Activated CD4-positive, alpha-beta memory T cell treated with anti-CD3 and anti-CD28 coated beads for 36 hours (primary cell): ENCODE measurements at regions of chr11 and their contacts with region 1.

Region 1: DNA sequence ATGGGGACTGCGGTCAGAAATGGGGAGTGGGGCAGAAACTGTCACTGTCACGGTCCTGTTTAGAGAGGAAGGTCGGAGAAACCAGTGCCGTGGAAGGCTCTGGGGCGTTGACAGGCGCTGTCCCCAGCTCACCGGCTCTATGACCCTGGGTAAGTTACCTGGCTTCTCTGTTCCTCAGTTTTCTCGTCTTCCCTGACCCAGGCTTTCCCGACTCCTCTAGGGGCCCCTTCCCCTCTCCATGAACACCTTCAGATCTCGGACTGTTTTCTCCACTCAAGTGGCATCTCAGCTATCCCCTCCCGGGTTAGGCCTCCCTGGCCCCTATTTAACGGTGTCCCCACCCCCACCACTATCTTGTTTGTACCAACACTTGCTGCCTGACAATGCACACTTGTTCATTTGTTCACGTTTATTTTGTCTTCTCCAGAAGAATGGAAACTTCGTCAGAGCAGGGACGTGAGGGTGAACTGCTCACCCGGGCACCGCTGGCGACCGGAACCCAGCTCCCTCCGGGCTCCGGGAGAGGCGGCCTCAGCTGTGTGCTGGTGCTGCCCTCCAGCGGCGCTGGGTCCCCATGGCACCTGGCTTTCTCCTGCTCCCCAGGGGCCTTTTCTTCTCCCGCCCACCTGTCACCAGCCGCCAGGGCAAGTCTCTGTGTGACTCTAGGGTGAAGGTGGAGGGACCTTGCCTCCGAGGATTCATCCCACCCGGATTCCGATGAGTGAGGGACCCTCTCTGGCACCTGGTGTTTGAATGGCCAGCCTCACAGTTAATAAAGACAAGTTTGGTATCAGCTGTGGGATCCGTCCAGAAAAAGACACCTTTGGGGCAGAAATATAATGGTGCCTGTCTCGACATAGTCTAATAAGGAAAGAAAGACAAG is 33.1 kb upstream of the SLC35C1 start:
- DNase-seq: peak; percentile 92
- H3K4me3 Mint-ChIP-seq: peak overlapping the region; percentile 86
- H3K27ac Mint-ChIP-seq: peak overlapping the region; percentile 35
- H3K4me1 Mint-ChIP-seq: peaks cover 24% of the 10 kb centered on the region
- H3K27me3 Mint-ChIP-seq: no peaks in the 10 kb centered on the region

Region 2: DNA sequence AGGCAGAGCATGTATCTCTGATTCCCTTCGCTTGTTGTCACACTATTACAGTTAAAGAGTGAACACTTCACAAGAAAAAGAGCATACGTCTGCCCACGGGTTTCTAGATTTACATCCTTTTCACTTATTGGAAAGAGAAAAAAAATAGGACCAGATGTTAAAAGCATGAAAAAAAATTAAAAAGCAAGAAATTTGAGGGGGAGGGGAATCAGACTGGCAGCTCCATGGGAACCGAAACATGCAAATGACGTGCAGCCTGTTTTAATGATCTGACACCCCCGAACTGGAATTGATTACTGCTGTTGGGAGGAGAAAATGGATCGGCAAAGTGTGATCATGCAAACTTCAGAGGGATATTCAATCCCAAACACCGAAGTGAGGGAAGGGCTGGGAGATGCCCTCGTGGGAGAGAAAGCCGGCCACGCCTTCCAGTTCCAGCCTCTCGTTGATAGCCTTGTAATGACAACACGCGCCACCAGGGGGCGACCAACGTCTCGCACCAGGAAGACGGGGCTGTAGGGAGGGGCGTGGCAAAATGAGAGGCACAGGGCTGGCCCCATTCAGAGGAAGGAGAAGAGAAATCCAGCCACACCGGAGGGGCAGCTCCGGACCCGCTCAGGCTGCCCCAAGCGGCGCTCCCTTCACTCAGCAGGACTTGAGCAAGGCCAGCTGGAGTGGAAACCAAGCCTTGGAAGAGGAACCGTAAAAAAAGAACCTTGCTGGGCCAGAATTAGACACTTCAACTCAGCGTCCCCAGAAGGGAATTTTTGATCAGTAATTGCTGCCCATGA is 431.9 kb before region 1 on chr11:
- CTCF ChIA-PET with region 1: interaction called, 40 read pairs
- POLR2A ChIA-PET with region 1: no interaction called
- intact Hi-C with region 1: loop called (anchors 1 kb)
- DNase-seq: peak; percentile 95
- H3K4me3 Mint-ChIP-seq: peak overlapping the region; percentile 62
- H3K27ac Mint-ChIP-seq: no peak overlapping the region
- H3K4me1 Mint-ChIP-seq: peaks cover 16% of the 10 kb centered on the region
- H3K27me3 Mint-ChIP-seq: peaks cover 11% of the 10 kb centered on the region

Region 3: GRCh38 chr11:45655347-45655756 is 116.5 kb before region 1 on chr11:
- CTCF ChIA-PET with region 1: interaction called, 35 read pairs
- POLR2A ChIA-PET with region 1: no interaction called
- intact Hi-C with region 1: loop called (anchors 5 kb)
- DNase-seq: peak; percentile 76
- H3K4me3 Mint-ChIP-seq: no peak overlapping the region
- H3K27ac Mint-ChIP-seq: no peak overlapping the region
- H3K4me1 Mint-ChIP-seq: no peaks in the 10 kb centered on the region
- H3K27me3 Mint-ChIP-seq: peaks cover 23% of the 10 kb centered on the region

Region 4: DNA sequence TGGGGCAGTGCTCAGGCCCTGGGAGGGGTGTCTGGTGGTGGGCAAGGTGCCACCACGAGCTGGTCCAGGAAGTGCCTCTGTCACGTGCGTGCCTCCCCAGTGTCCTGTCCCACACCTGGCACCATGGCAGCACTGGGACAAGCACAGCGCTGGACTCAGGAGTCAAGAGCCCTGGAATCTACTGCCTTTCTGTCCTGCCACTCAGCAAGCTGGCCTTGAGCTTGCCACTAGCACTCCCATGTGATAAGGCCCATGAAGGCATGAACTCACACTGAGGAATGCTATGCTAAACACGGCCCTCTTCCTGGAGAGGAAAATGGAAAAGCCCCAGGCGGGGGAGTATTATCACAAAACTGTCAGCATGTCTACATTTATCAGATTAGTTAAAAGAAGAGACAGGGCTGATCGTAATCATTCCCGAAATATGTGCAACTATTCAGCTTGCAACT is 17.5 kb before region 1 on chr11:
- CTCF ChIA-PET with region 1: interaction called, 12 read pairs
- POLR2A ChIA-PET with region 1: no interaction called
- intact Hi-C with region 1: no loop called
- DNase-seq: no peak
- H3K4me3 Mint-ChIP-seq: no peak overlapping the region
- H3K27ac Mint-ChIP-seq: no peak overlapping the region
- H3K4me1 Mint-ChIP-seq: no peaks in the 10 kb centered on the region
- H3K27me3 Mint-ChIP-seq: peaks cover 33% of the 10 kb centered on the region

Region 5: DNA sequence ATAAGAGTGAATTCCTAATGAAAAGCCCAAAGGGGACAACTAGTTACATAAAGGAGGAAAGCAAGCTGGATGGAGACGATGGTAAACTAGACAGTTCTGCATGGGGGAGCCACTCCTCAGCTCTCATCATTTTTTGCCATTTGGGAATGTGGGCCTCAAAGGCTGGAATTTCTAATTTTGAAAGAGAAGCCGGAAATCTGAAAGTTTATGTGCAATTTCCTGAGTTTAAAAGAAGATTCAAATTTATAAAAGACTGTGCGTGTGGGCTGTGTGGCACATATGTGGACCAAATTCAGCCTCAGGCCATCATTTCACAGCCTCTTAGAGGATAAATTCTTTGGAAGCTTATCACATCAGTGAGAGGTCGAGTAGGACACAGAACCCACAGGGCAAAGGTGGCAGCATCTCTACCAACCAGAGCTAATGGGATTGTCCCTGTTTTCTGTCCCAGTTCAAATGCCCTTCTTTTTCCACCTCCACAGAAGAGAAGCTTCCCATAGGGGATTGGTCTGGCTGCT is 57.2 kb after region 1 on chr11:
- CTCF ChIA-PET with region 1: interaction called, 10 read pairs
- POLR2A ChIA-PET with region 1: no interaction called
- intact Hi-C with region 1: no loop called
- DNase-seq: no peak
- H3K4me3 Mint-ChIP-seq: no peak overlapping the region
- H3K27ac Mint-ChIP-seq: no peak overlapping the region
- H3K4me1 Mint-ChIP-seq: peaks cover 5% of the 10 kb centered on the region
- H3K27me3 Mint-ChIP-seq: peaks cover 15% of the 10 kb centered on the region